ENCODE measurements at regions of chr11 and their contacts with region 1.

Region 1: GRCh38 chr11:96228473-96228891 is 114.5 kb downstream of the MAML2 start:
- DNase-seq: no peak
- H3K4me3 Mint-ChIP-seq: no peak overlapping the region
- H3K27ac Mint-ChIP-seq: no peak overlapping the region
- H3K4me1 Mint-ChIP-seq: peaks cover 50% of the 10 kb centered on the region
- H3K27me3 Mint-ChIP-seq: no peaks in the 10 kb centered on the region

Region 2: GRCh38 chr11:96215110-96215782 is 13.2 kb before region 1 on chr11:
- intact Hi-C with region 1: loop called (anchors 1 kb)
- DNase-seq: no peak
- H3K4me3 Mint-ChIP-seq: peak overlapping the region; percentile 68
- H3K27ac Mint-ChIP-seq: peak overlapping the region; percentile 95
- H3K4me1 Mint-ChIP-seq: peaks cover 67% of the 10 kb centered on the region
- H3K27me3 Mint-ChIP-seq: no peaks in the 10 kb centered on the region

Region 3: GRCh38 chr11:96384150-96384549 is 155.7 kb after region 1 on chr11:
- intact Hi-C with region 1: no loop called
- DNase-seq: no peak
- H3K4me3 Mint-ChIP-seq: peak overlapping the region; percentile 52
- H3K27ac Mint-ChIP-seq: peak overlapping the region; percentile 1
- H3K4me1 Mint-ChIP-seq: peaks cover 50% of the 10 kb centered on the region
- H3K27me3 Mint-ChIP-seq: no peaks in the 10 kb centered on the region